ENCODE measurements at regions of chr4 and their contacts with region 1.

Region 1: DNA sequence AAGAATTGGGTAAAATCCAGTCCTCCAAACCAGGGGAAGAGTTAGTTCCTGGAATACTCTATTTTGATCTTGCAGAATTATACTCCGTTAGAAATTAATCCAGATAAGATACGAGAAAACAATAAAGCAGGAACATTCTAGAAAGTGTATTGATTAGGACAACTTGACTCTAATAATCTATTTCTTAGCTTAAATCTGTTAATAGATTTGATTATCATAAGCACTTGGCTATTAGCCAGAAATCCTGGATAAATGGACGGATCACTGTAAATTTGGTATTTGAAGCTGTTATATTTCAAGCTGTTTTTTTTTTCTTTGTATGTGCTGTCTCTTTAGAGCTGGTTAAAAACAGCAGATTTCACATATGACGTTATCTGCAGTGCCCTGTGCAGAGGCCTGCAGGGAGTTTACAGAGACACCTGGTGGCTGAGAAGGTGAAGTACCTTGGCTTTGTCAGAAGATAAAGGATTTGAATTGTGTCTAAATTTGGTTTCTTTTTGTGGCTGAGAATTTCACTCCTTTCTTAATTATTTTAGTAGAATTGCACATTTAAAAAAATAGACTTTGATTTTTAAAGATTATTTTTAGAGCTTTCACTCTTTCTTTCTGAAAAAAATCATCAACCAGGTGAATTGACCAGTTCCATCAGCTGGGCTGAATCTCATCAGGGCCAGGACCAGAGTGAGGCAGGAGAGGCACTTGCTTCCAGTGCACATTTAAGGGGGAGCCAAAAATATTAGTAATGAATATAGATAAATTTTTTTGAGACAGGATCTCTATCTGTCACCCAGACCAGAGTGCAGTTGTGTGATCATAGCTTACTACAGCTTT is 9.7 kb upstream of the CHRNA9 start:
- DNase-seq: peak; percentile 80
- CTCF ChIP-seq: peak; percentile 79

Region 2: GRCh38 chr4:40056716-40057585 is 268.5 kb before region 1 on chr4 and contains the start of gene N4BP2:
- in situ Hi-C with region 1: loop called (anchors 10 kb)
- DNase-seq: peak; percentile 89
- CTCF ChIP-seq: peak; percentile 96

Region 3: DNA sequence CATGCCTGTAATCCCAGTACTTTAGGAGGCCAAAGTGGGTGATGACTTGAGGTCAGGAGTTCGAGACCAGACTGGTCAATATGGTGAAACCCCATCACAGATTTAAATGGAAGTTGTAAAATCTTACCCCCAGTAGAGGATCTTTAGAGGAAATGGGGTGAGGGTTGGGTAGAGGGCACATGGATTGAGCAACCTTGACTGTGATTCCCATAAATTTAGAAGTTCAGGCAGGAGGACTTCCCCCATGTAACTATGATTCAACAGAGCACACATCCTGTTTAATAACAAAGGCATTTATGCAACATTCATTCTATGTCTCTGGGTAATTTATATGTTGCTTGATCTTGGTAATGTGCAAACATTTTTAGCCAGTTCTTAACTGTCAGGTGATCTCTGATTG is 161.1 kb after region 1 on chr4:
- in situ Hi-C with region 1: no loop called
- DNase-seq: no peak
- CTCF ChIP-seq: no peak

Region 4: DNA sequence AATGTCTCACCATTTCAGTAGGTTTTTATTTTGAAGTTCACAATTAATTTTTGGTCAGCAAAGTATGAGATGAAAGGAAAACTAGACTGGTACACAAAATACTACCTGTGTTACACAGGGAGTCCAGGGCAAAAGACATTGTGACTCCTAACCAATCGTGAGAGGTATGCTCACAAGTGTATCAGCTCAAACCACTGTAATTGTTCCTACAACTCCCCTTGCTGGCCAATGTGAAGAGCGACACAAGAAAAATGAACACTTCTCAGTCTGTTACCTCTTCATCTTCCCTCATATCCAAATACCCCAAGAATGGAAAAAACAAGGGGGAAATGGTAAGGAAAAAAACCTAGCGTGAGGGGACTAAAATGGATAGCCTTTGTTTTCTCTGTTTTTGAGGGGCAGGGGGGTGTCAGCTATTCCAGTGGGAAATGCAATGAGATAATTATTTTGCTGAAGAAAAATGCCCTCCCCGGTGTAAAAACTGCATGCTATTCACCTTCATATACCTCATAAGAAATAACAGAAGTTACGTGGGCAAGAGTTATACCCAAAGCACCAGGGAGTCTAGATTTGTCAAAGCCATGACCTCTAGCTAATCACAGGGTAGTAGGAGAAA is 393.7 kb after region 1 on chr4:
- in situ Hi-C with region 1: loop called (anchors 25 kb)
- DNase-seq: peak; percentile 66
- CTCF ChIP-seq: peak; percentile 86

Measured in GM13977 (cell line).